GM18951 (cell line): ENCODE measurements at regions of chr1 and their contacts with region 1.

Region 1: DNA sequence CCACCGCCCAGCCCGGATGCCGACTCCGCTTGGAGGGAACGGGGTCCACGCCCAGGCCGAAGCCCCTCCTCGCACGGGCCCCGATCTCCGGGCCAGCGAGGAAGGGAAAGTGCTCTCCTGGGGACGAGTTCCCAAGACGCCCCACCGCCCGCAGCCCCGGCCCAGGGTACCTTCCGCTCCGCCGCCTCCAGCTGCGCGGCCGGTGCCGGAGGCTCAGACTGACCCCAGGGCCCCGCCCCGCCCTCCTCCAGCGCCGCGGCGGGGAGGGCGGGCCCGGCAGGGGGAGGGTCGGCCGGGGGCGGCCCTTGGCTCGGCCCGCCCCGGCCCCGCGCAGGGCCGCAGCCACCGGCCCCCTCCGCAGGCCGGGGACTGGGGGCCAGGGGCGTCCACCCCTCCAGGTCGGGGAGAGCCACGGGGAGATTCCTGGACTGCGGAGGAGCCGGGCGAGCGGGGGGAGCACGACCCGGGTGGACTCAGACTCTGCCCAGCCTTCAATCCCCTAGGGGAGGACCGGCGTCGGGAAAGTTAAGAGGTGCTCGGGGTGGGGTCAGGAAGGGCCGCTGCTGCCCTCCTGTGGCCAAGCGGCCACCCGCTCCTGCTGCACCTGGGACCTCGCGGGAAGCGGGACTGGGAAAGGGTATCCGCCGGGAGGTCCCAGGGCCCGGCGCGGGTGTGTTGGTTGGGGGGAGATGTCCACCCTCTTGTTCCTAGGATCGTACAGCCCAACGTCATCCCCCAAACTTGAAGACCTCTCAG is at the start of gene RHOC:
- POLR2A ChIP-seq: peak; percentile 77

Region 2: DNA sequence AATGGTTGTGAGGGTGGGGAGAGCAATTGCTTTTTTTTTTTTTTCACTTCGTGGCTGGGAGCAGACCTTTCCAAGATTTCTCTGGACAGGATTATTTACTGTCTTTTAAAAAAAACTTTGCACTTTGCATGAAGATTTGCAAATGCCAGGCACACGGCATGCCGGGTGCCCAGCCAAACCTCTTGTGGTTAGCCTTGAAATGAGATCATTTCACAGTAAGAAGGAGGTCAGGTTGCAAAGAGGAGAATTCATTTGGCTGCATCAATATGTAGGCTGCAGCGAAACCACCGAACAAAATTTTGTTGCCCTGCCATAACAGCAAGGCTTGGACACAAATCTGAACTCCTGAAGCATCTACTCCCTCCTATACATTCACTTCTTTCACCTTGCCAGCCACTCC is 681.1 kb before region 1 on chr1:
- in situ Hi-C with region 1: no loop called
- POLR2A ChIP-seq: no peak

Region 3: GRCh38 chr1:112564081-112564480 is 143.0 kb before region 1 on chr1:
- in situ Hi-C with region 1: no loop called
- POLR2A ChIP-seq: no peak

Region 4: GRCh38 chr1:112619520-112620376 is 87.3 kb before region 1 on chr1 and contains the start of gene CAPZA1:
- in situ Hi-C with region 1: loop called (anchors 5 kb)
- POLR2A ChIP-seq: peak; percentile 94